ENCODE measurements at regions of chr22 and their contacts with region 1.

Region 1: GRCh38 chr22:38569972-38570778 is at the start of gene DMC1:
- DNase-seq: peak; percentile 94 to 97 (median 96)
- ATAC-seq: peak; percentile 97
- H3K4me3 ChIP-seq: peak within 1 kb of the TSS; percentile 19 to 22
- H3K27ac ChIP-seq: peak within 1 kb of the TSS in 3 of 4 donors; percentile 27 to 67 (median 58)
- H3K4me1 ChIP-seq: peaks cover 14% of the 10 kb centered on the region
- H3K27me3 ChIP-seq: no peaks in the 10 kb centered on the region
- CTCF ChIP-seq: no peak
- POLR2A ChIP-seq: peak in 2 of 3 donors; percentile 33 to 47
- total RNA-seq, gene DMC1: 0.78 TPM in 1 of 2 donors, not detected in the other

Region 2: GRCh38 chr22:38040953-38041759 is 529.0 kb before region 1 on chr22:
- intact Hi-C with region 1: loop called (anchors 10 kb)
- DNase-seq: no peak
- ATAC-seq: no peak
- H3K4me3 ChIP-seq: no peak overlapping the region
- H3K27ac ChIP-seq: no peak overlapping the region
- H3K4me1 ChIP-seq: no peaks in the 10 kb centered on the region
- H3K27me3 ChIP-seq: no peaks in the 10 kb centered on the region
- CTCF ChIP-seq: no peak
- POLR2A ChIP-seq: no peak

Region 3: GRCh38 chr22:38513063-38513462 is 57.1 kb before region 1 on chr22:
- intact Hi-C with region 1: loop called (anchors 10 kb)
- DNase-seq: no peak
- ATAC-seq: no peak
- H3K4me3 ChIP-seq: no peak overlapping the region
- H3K27ac ChIP-seq: no peak overlapping the region
- H3K4me1 ChIP-seq: no peaks in the 10 kb centered on the region
- H3K27me3 ChIP-seq: no peaks in the 10 kb centered on the region
- CTCF ChIP-seq: peak in 1 of 7 experiments; percentile 15
- POLR2A ChIP-seq: no peak

Region 4: GRCh38 chr22:38681784-38682335 is 111.7 kb after region 1 on chr22 and contains the start of gene TOMM22:
- intact Hi-C with region 1: no loop called
- DNase-seq: peak; percentile 87 to 92 (median 88)
- ATAC-seq: peak; percentile 100
- H3K4me3 ChIP-seq: peak within 1 kb of the TSS; percentile 95 to 98
- H3K27ac ChIP-seq: peak within 1 kb of the TSS in 3 of 4 donors; percentile 68 to 77 (median 73)
- H3K4me1 ChIP-seq: peaks cover 12% of the 10 kb centered on the region
- H3K27me3 ChIP-seq: no peaks in the 10 kb centered on the region
- CTCF ChIP-seq: peak; percentile 26 to 92 (median 53)
- POLR2A ChIP-seq: peak; percentile 49 to 82 (median 81)
- total RNA-seq, gene TOMM22: 16.6 to 21.4 TPM

Measured in body of pancreas (tissue), 4 donors.